Transverse colon (tissue), 4 donors: ENCODE measurements at regions of chr12 and their contacts with region 1.

Region 1: GRCh38 chr12:69254046-69254445 is 14.7 kb downstream of the CPSF6 start:
- DNase-seq: no peak
- H3K4me3 ChIP-seq: no peak overlapping the region
- H3K27ac ChIP-seq: no peak overlapping the region
- H3K4me1 ChIP-seq: peaks cover 0 to 34% (median 8%) of the 10 kb centered on the region in 4 donors
- H3K27me3 ChIP-seq: no peaks in the 10 kb centered on the region
- CTCF ChIP-seq: peak; percentile 61 to 77 (median 67)
- EP300 ChIP-seq: no peak
- POLR2A ChIP-seq: no peak

Region 2: DNA sequence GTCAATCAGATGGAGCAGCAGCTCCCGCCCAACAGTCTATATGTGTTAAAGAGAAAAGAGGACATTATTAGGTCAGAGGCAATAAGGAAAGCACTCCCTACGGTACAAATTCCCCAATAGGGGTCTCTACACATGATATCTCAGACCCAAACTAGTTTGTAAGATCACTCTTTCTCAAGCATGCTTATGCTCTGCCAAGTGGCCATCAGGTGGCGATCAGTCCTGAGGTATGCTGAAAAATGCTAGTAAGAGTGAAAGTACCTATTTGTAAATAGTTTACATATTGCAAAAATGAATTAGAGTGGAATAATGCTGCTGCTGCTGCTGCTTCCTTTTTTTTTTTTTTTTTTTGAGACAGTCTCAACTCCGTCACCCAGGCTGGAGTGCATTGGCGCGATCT is 382.1 kb before region 1 on chr12:
- in situ Hi-C with region 1: loop called in 1 of 4 experiments (anchors 25 kb)
- intact Hi-C with region 1: no loop called
- DNase-seq: no peak
- H3K4me3 ChIP-seq: no peak overlapping the region
- H3K27ac ChIP-seq: no peak overlapping the region
- H3K4me1 ChIP-seq: no peaks in the 10 kb centered on the region
- H3K27me3 ChIP-seq: no peaks in the 10 kb centered on the region
- CTCF ChIP-seq: peak in 1 of 5 experiments; percentile 5
- EP300 ChIP-seq: no peak
- POLR2A ChIP-seq: no peak

Region 3: GRCh38 chr12:69149270-69149669 is 104.8 kb before region 1 on chr12:
- in situ Hi-C with region 1: loop called in 1 of 4 experiments (anchors 10 kb)
- intact Hi-C with region 1: loop called (anchors 5 kb)
- DNase-seq: no peak
- H3K4me3 ChIP-seq: no peak overlapping the region
- H3K27ac ChIP-seq: peak overlapping the region in 3 of 4 donors; percentile 81 to 86 (median 83)
- H3K4me1 ChIP-seq: peaks cover 0 to 45% (median 20%) of the 10 kb centered on the region in 4 donors
- H3K27me3 ChIP-seq: no peaks in the 10 kb centered on the region
- CTCF ChIP-seq: no peak
- EP300 ChIP-seq: no peak
- POLR2A ChIP-seq: no peak

Region 4: DNA sequence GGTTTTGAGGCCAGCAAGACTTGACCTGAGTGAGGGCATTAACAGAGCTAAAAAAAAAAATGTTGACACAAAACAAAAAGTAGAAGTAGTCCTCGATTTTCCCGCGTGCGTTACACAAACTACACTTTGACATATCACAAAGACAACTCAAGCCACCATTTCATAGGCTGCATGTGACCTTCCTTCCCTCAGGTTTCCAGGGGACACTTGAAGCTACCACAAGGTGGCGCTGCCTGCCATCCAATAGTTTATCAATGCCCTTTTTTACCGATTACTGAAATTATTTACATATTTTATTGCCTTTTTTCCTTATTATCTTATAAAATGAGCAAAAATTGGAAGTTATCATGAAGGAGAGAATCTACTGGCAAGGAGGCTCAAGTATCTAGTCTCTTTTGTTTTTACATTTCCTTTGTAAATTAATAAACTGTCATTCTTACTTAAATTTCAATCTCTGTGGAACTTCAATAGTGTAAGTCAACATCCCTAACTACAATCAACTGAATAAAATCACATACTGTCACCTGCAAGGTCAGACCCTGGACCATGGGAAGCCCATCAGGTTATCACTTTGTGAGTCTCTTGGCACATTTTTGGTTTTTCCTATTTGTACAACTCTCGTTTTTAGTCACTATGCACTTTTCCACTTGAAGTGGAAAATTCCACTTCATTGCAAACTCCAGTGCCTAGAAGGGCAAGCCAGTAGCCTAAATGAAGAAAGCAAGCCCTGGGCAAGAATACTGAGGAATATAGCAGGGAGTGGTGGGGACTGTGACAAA is 99.3 kb before region 1 on chr12:
- in situ Hi-C with region 1: loop called in 1 of 4 experiments (anchors 10 kb)
- intact Hi-C with region 1: loop called (anchors 5 kb)
- DNase-seq: peak; percentile 80
- H3K4me3 ChIP-seq: no peak overlapping the region
- H3K27ac ChIP-seq: no peak overlapping the region
- H3K4me1 ChIP-seq: peaks cover 0 to 47% (median 16%) of the 10 kb centered on the region in 4 donors
- H3K27me3 ChIP-seq: no peaks in the 10 kb centered on the region
- CTCF ChIP-seq: peak; percentile 89 to 94 (median 92)
- EP300 ChIP-seq: no peak
- POLR2A ChIP-seq: no peak

Region 5: GRCh38 chr12:69464428-69464827 is 210.4 kb after region 1 on chr12:
- in situ Hi-C with region 1: no loop called
- intact Hi-C with region 1: no loop called
- DNase-seq: no peak
- H3K4me3 ChIP-seq: no peak overlapping the region
- H3K27ac ChIP-seq: no peak overlapping the region
- H3K4me1 ChIP-seq: peaks cover 0 to under 1% (median 0%) of the 10 kb centered on the region in 4 donors
- H3K27me3 ChIP-seq: no peaks in the 10 kb centered on the region
- CTCF ChIP-seq: no peak
- EP300 ChIP-seq: no peak
- POLR2A ChIP-seq: no peak